Ovary (tissue), 10 donors: ENCODE measurements at regions of chr3 and their contacts with region 1.

Region 1: DNA sequence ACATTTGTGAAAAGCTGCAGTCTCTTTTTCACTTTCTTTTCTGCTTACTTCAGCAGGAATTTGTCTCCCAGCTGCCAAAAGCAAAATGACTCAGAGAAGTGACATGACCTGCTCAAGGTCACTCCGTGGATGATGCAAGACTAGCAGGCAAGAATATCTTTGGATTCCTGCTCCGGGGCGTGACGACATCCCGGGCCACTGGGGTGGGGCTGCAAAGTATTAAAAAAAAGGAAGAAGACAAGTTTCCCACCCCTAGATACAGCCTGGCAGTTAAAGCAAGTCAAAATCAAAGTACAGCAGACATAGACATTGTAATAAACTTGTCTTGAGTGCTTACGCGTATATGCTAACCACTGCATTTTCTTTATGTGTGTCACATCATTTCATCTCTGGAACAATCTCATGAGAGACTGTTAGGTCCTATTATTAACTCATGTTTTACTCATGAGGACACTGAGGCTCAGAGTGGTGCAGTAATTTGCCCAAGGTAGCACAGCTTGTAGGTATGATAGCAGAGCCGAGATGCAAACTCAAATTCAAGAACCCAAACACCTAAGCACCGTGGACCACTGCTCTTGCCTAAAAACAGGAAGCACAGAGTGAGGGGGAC is 485.2 kb upstream of the PROK2 start:
- DNase-seq: peak; percentile 91 to 98 (median 94)
- H3K4me3 ChIP-seq: no peak overlapping the region
- H3K27ac ChIP-seq: peak overlapping the region in 1 of 2 donors; percentile 67
- H3K4me1 ChIP-seq: peaks cover 24% of the 10 kb centered on the region
- H3K27me3 ChIP-seq: no peaks in the 10 kb centered on the region
- CTCF ChIP-seq: no peak
- EP300 ChIP-seq: peak; percentile 75
- POLR2A ChIP-seq: no peak

Region 2: GRCh38 chr3:72163809-72164634 is 106.2 kb before region 1 on chr3:
- intact Hi-C with region 1: no loop called
- DNase-seq: no peak
- H3K4me3 ChIP-seq: no peak overlapping the region
- H3K27ac ChIP-seq: no peak overlapping the region
- H3K4me1 ChIP-seq: no peaks in the 10 kb centered on the region
- H3K27me3 ChIP-seq: no peaks in the 10 kb centered on the region
- CTCF ChIP-seq: no peak
- EP300 ChIP-seq: no peak
- POLR2A ChIP-seq: no peak

Region 3: GRCh38 chr3:72329354-72329753 is 59.2 kb after region 1 on chr3:
- intact Hi-C with region 1: loop called in 1 of 4 experiments (anchors 10 kb)
- DNase-seq: peak in 4 of 5 donors; percentile 45 to 63 (median 52)
- H3K4me3 ChIP-seq: no peak overlapping the region
- H3K27ac ChIP-seq: no peak overlapping the region
- H3K4me1 ChIP-seq: peaks cover 7% of the 10 kb centered on the region
- H3K27me3 ChIP-seq: no peaks in the 10 kb centered on the region
- CTCF ChIP-seq: no peak
- EP300 ChIP-seq: no peak
- POLR2A ChIP-seq: no peak

Region 4: GRCh38 chr3:72447059-72447946 is 177.1 kb after region 1 on chr3:
- intact Hi-C with region 1: loop called in 1 of 4 experiments (anchors 10 kb)
- DNase-seq: peak; percentile 92 to 97 (median 95)
- H3K4me3 ChIP-seq: peak overlapping the region; percentile 79
- H3K27ac ChIP-seq: peak overlapping the region; percentile 31 to 73
- H3K4me1 ChIP-seq: peaks cover 11% of the 10 kb centered on the region
- H3K27me3 ChIP-seq: no peaks in the 10 kb centered on the region
- CTCF ChIP-seq: no peak
- EP300 ChIP-seq: no peak
- POLR2A ChIP-seq: no peak